PC-3 (cell line): ENCODE measurements at regions of chr15 and their contacts with region 1.

Region 1: GRCh38 chr15:92917606-92918407 is 17.7 kb downstream of the CHD2 start:
- DNase-seq: peak; percentile 96
- ATAC-seq: peak; percentile 23
- H3K4me3 ChIP-seq: peak overlapping the region; percentile 28; the same call in 1 of the 2 replicates
- H3K27ac ChIP-seq: peak overlapping the region; percentile 77
- H3K4me1 ChIP-seq: peaks cover 84% of the 10 kb centered on the region
- H3K27me3 ChIP-seq: no peaks in the 10 kb centered on the region
- CTCF ChIP-seq: peak; percentile 93

Region 2: GRCh38 chr15:92430069-92430440 is 487.8 kb before region 1 on chr15:
- CTCF ChIA-PET with region 1: no interaction called
- POLR2A ChIA-PET with region 1: no interaction called
- intact Hi-C with region 1: no loop called
- DNase-seq: no peak
- ATAC-seq: no peak
- H3K4me3 ChIP-seq: no peak overlapping the region
- H3K27ac ChIP-seq: no peak overlapping the region
- H3K4me1 ChIP-seq: peaks cover 5% of the 10 kb centered on the region; the same call in 1 of the 2 replicates
- H3K27me3 ChIP-seq: peaks cover 85% of the 10 kb centered on the region
- CTCF ChIP-seq: no peak

Region 3: DNA sequence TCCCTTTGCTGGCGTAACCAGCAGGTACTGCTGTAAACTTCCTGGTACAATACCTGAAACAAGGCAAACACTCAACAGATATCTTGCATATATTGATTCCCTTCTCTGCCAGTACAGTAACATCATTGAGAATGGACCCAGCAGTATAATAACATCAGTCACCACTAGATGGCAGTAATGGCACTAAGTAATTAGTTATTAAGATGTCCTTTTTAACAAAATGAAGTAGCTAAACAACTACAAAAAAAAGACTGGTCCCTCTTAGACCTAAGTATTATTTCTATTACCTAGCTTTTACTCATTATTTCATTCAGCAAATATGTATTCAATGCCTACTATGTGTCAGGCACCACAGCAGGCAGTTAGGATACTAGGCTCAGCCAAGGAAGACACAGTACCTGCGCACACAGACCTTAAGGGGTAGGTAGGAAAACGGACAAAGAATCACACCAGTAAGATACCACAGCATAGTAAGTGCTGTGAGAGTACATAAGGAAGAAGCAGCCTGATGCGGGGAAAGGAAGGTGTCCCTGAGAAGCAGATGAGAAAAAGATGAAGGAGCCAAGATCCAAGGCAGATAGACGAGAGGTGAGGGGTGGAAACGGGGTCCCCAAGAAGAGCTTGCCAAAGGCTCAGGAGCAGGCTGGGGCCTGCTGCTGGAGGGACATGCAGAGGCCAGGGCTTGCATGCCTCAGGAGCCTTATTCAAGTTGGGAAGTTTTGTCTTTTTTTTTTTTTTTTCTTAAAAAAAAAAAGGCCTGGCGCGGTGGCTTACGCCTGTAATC is 120.4 kb before region 1 on chr15:
- CTCF ChIA-PET with region 1: interaction called, 9 read pairs
- POLR2A ChIA-PET with region 1: no interaction called
- intact Hi-C with region 1: loop called (anchors 1 kb)
- DNase-seq: peak; percentile 94
- ATAC-seq: peak; percentile 63
- H3K4me3 ChIP-seq: no peak overlapping the region
- H3K27ac ChIP-seq: peak overlapping the region; percentile 14; the same call in 1 of the 2 replicates
- H3K4me1 ChIP-seq: peaks cover 19% of the 10 kb centered on the region
- H3K27me3 ChIP-seq: no peaks in the 10 kb centered on the region
- CTCF ChIP-seq: peak; percentile 81

Region 4: DNA sequence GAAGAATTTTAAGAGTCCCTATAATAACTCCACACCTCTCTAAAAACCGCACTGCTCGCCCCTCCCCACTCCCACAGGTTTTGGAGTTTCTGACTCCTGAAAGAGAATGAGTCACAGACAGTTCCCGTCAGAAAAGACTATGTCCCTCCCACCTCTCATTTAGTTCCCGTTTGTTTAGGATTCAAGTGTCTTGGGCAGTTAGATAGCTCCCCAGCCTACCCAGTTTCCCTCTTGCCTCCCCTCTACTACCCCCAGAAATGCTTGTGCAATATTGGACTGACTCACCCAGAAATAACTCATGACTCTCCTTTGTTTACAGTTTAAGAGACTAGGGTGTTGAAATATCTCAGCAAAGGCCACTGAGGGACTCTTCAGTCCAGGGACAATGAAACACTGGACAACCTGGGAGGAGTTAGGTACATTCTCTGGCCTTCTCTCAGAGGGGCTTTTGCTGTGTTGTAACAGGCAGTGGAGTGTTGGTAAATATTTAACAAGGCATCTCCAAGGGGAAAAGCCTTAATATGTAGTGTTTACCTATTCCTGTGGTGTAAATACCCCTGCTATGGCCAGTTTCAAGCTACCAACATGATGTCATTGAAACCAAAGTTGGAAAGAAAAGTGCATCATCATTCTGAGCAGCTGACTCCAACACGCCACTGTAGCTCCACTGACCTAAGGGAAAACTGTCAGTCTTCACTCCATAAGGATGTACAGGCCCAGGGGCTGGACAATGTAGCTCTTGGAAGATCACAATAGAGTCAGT is 113.8 kb before region 1 on chr15:
- CTCF ChIA-PET with region 1: no interaction called
- POLR2A ChIA-PET with region 1: no interaction called
- intact Hi-C with region 1: loop called (anchors 1 kb)
- DNase-seq: peak; percentile 99
- ATAC-seq: peak; percentile 73
- H3K4me3 ChIP-seq: no peak overlapping the region
- H3K27ac ChIP-seq: peak overlapping the region; percentile 92
- H3K4me1 ChIP-seq: peaks cover 50% of the 10 kb centered on the region
- H3K27me3 ChIP-seq: no peaks in the 10 kb centered on the region
- CTCF ChIP-seq: no peak

Region 5: GRCh38 chr15:92906563-92907140 is 11.2 kb before region 1 on chr15:
- CTCF ChIA-PET with region 1: interaction called, 7 read pairs
- POLR2A ChIA-PET with region 1: interaction called, 10 read pairs
- intact Hi-C with region 1: loop called (anchors 1 kb)
- DNase-seq: peak; percentile 94
- ATAC-seq: peak; percentile 48
- H3K4me3 ChIP-seq: peak overlapping the region; percentile 78
- H3K27ac ChIP-seq: peak overlapping the region; percentile 92
- H3K4me1 ChIP-seq: peaks cover 59% of the 10 kb centered on the region
- H3K27me3 ChIP-seq: no peaks in the 10 kb centered on the region
- CTCF ChIP-seq: no peak